Activated CD4-positive, alpha-beta memory T cell treated with anti-CD3 and anti-CD28 coated beads for 36 hours (primary cell): ENCODE measurements at regions of chr1 and their contacts with region 1.

Region 1: GRCh38 chr1:227748496-227749182 is 13.4 kb downstream of the SNAP47 start:
- DNase-seq: peak; percentile 75
- H3K4me3 Mint-ChIP-seq: peak overlapping the region; percentile 33
- H3K27ac Mint-ChIP-seq: peak overlapping the region; percentile 94
- H3K4me1 Mint-ChIP-seq: peaks cover 45% of the 10 kb centered on the region
- H3K27me3 Mint-ChIP-seq: no peaks in the 10 kb centered on the region

Region 2: DNA sequence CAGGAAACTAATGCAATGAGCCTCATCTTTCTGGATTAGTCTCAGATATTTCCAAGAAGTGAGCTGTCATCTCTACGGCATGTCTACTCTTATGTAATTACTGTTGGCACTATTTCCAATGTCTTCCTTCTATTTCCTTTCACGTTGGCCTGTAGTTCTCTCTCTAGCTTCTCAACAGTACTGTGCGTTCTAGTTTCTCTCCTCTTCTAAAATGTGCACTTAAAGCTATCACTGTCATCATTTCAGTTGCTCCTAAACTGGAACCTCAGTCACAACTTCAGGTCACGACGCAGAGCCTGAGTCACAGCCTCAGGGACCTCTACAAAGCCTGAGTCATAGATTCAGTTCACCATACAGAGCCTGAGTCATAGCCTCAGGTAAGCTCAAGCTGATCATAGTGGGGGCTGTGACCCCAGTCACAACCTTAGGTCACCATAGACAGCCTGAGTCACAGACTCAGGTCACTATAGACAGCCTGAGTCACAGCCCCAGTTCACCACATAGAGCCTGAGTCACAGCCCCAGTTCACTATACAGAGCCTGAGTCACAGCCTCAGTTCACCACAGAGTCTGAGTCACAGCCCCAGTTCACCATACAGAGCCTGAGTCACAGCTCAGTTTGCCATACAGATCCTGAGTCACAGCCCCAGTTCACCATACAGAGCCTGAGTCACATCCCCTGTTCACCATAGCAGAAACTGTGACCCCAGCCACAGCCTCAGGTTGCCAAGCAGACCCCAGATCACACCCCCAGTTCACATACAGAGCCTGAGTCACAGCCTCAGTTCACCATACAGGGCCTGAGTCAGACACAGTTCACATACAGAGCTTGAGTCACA is 186.1 kb after region 1 on chr1:
- CTCF ChIA-PET with region 1: no interaction called
- POLR2A ChIA-PET with region 1: no interaction called
- intact Hi-C with region 1: loop called (anchors 1 kb)
- DNase-seq: peak; percentile 83
- H3K4me3 Mint-ChIP-seq: no peak overlapping the region
- H3K27ac Mint-ChIP-seq: peak overlapping the region; percentile 71
- H3K4me1 Mint-ChIP-seq: peaks cover 20% of the 10 kb centered on the region
- H3K27me3 Mint-ChIP-seq: no peaks in the 10 kb centered on the region